ENCODE measurements at regions of chr3 and their contacts with region 1.

Region 1: GRCh38 chr3:112582244-112582874 is 20.5 kb downstream of the SLC35A5 start:
- DNase-seq: peak; percentile 65
- ATAC-seq: peak; percentile 69
- H3K4me3 Mint-ChIP-seq: no peak overlapping the region
- H3K27ac Mint-ChIP-seq: no peak overlapping the region
- H3K4me1 Mint-ChIP-seq: peaks cover 9% of the 10 kb centered on the region
- H3K27me3 Mint-ChIP-seq: no peaks in the 10 kb centered on the region

Region 2: GRCh38 chr3:112149136-112149535 is 433.2 kb before region 1 on chr3:
- CTCF ChIA-PET with region 1: no interaction called
- POLR2A ChIA-PET with region 1: no interaction called
- intact Hi-C with region 1: no loop called
- DNase-seq: no peak
- ATAC-seq: no peak
- H3K4me3 Mint-ChIP-seq: no peak overlapping the region
- H3K27ac Mint-ChIP-seq: no peak overlapping the region
- H3K4me1 Mint-ChIP-seq: peaks cover under 1% of the 10 kb centered on the region
- H3K27me3 Mint-ChIP-seq: no peaks in the 10 kb centered on the region

Region 3: DNA sequence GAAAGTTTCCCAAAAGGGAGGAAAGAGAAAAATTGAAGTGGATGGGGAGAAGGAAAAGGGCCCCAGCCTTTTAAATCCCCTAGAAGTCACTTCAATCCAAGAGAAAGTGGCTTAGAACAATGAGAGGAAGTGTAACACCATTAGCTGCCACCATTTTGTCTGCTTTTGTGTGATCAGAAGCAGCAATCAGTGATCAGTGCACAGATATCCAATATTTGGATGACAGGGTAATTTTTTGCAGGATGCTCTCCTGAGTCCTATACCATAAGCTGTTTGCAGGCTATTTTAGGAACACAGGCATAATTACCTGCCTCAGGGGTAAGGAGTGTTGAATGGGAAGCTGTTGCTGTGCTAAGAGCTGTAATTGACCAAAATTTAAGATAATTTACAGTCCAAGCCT is 10.9 kb after region 1 on chr3:
- CTCF ChIA-PET with region 1: interaction called, 17 read pairs
- POLR2A ChIA-PET with region 1: no interaction called
- intact Hi-C with region 1: no loop called
- DNase-seq: no peak
- ATAC-seq: no peak
- H3K4me3 Mint-ChIP-seq: no peak overlapping the region
- H3K27ac Mint-ChIP-seq: no peak overlapping the region
- H3K4me1 Mint-ChIP-seq: no peaks in the 10 kb centered on the region
- H3K27me3 Mint-ChIP-seq: no peaks in the 10 kb centered on the region

Region 4: DNA sequence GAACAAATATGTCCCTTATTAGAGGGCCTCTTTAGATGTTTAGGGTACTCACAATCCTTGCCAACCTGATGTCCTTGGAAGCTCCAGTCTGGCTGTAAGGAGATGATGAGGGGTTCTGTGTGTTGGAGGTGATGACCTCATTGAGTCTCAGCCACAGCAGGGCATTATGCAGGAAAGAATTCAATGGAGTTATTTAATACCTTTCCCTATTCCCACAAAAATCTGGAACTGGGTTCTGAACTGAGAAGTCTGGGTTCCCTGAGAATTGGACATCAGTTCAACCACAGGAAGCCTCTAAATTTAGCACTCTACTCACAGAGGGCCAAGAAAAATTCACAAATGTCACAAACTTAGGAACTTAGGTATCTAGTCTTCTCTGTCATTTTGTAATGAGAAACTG is 16.4 kb after region 1 on chr3:
- CTCF ChIA-PET with region 1: interaction called, 17 read pairs
- POLR2A ChIA-PET with region 1: no interaction called
- intact Hi-C with region 1: no loop called
- DNase-seq: no peak
- ATAC-seq: no peak
- H3K4me3 Mint-ChIP-seq: no peak overlapping the region
- H3K27ac Mint-ChIP-seq: no peak overlapping the region
- H3K4me1 Mint-ChIP-seq: peaks cover 16% of the 10 kb centered on the region
- H3K27me3 Mint-ChIP-seq: no peaks in the 10 kb centered on the region

Region 5: GRCh38 chr3:112605285-112605684 is 22.9 kb after region 1 on chr3:
- CTCF ChIA-PET with region 1: interaction called, 12 read pairs
- POLR2A ChIA-PET with region 1: no interaction called
- intact Hi-C with region 1: no loop called
- DNase-seq: peak; percentile 14
- ATAC-seq: peak; percentile 75
- H3K4me3 Mint-ChIP-seq: no peak overlapping the region
- H3K27ac Mint-ChIP-seq: no peak overlapping the region
- H3K4me1 Mint-ChIP-seq: peaks cover 25% of the 10 kb centered on the region
- H3K27me3 Mint-ChIP-seq: no peaks in the 10 kb centered on the region

Region 6: DNA sequence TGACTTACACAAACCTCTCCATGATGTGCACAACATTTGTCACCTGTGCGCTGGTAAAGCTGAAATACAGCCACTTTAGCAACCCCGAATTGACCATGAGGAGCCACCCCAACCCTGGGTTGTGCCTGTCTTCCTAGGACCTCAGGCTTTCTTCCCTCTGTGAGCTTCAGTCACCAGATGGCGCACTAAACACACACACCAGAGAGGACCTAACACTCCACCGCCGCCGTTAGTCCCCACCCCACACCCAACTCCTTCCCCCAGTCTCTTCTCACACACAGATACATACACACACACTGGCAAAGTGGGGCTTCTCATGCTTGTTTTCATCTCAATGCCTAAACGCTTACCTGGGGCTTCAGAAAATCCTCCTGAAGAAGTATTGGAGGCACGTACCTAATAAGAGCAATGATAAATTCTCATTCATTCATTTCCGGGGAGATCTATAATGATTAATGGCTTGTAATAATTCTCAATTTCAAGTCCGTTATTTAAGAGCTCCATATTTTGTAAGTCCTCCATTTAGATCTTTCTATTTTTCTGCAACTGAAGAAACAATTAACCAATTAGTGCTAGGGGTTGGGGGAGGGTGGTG is 60.6 kb after region 1 on chr3:
- CTCF ChIA-PET with region 1: interaction called, 12 read pairs
- POLR2A ChIA-PET with region 1: no interaction called
- intact Hi-C with region 1: loop called in 1 of 2 experiments (anchors 2 kb)
- DNase-seq: peak; percentile 90
- ATAC-seq: peak; percentile 98
- H3K4me3 Mint-ChIP-seq: peak overlapping the region; percentile 48
- H3K27ac Mint-ChIP-seq: peak overlapping the region; percentile 58
- H3K4me1 Mint-ChIP-seq: peaks cover 17% of the 10 kb centered on the region
- H3K27me3 Mint-ChIP-seq: peaks cover 3% of the 10 kb centered on the region

Region 7: GRCh38 chr3:112814266-112814665 is 231.9 kb after region 1 on chr3:
- CTCF ChIA-PET with region 1: interaction called, 4 read pairs
- POLR2A ChIA-PET with region 1: no interaction called
- intact Hi-C with region 1: loop called (anchors 5 kb)
- DNase-seq: no peak
- ATAC-seq: no peak
- H3K4me3 Mint-ChIP-seq: no peak overlapping the region
- H3K27ac Mint-ChIP-seq: no peak overlapping the region
- H3K4me1 Mint-ChIP-seq: peaks cover 10% of the 10 kb centered on the region
- H3K27me3 Mint-ChIP-seq: no peaks in the 10 kb centered on the region

Region 8: DNA sequence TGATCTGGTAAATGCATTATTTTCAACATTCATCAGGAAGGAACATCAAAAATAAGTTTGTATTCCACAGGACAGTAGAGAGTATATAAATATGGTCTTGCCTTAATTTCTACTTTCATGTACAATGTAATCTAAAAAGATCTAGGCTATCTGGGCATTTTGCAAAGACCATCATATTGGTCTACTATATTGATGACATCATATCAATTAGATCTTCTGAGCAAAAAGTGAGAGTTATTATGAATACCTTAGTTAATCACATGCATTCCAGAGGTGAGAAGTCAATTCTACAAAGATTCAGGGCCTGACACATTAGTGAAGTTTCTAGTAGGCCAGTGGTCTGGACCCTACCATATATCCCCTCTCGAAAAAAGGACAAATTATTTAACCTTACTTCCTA is 250.4 kb after region 1 on chr3:
- CTCF ChIA-PET with region 1: no interaction called
- POLR2A ChIA-PET with region 1: no interaction called
- intact Hi-C with region 1: no loop called
- DNase-seq: no peak
- ATAC-seq: no peak
- H3K4me3 Mint-ChIP-seq: no peak overlapping the region
- H3K27ac Mint-ChIP-seq: no peak overlapping the region
- H3K4me1 Mint-ChIP-seq: no peaks in the 10 kb centered on the region
- H3K27me3 Mint-ChIP-seq: no peaks in the 10 kb centered on the region

Region 9: DNA sequence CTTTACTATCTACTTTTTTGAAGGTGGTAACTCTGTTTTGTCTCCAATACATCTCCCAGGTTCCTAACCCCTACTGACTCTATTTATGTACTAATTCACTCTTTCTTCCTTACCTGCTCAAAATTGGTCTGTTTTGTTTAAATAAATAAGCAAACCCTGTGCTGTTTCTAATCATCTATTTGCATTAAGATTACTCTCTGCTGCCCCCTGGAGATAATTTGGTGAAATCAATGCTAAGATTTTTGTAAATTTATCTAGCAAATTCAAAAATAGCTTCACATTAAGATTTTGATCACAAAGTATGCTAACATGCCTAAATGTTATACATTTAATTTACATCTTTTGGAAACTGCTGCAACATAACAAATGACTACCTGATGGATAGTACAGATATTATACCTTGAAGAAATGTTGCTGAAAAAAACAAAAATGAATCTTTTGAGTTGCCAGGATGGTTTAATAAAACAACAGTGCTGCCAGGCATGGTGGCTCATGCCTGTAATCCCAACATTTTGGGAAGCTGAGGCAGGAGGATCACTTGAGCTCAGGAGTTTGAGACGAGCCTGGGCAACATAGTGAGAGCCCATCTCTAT is 397.0 kb after region 1 on chr3:
- CTCF ChIA-PET with region 1: interaction called, 9 read pairs
- POLR2A ChIA-PET with region 1: no interaction called
- intact Hi-C with region 1: loop called (anchors 2 kb)
- DNase-seq: no peak
- ATAC-seq: no peak
- H3K4me3 Mint-ChIP-seq: no peak overlapping the region
- H3K27ac Mint-ChIP-seq: no peak overlapping the region
- H3K4me1 Mint-ChIP-seq: peaks cover 73% of the 10 kb centered on the region
- H3K27me3 Mint-ChIP-seq: no peaks in the 10 kb centered on the region